ENCODE measurements at regions of chr11 and their contacts with region 1.

Region 1: DNA sequence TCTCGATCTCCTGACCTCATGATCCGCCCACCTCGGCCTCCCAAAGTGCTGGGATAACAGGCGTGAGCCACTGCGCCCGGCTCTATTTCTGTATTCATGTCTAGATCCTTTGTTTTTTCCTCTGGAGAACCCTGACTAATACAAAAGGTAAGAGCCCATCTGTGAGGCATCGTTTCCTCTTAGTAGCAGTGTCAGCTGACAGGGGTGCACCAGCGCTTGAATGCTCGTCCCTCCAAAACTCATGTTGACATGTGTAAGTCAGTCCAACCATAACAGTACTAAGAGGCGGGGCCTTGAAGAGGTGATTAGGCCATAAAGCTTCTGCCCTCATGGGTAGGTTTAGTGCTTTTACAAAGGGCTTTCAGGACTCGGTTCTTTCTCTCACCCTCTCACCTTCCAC is 470.1 kb upstream of the B3GAT1 start:
- DNase-seq: no peak
- H3K4me3 Mint-ChIP-seq: no peak overlapping the region
- H3K27ac Mint-ChIP-seq: no peak overlapping the region
- H3K4me1 Mint-ChIP-seq: no peaks in the 10 kb centered on the region
- H3K27me3 Mint-ChIP-seq: peaks cover 4% of the 10 kb centered on the region

Region 2: DNA sequence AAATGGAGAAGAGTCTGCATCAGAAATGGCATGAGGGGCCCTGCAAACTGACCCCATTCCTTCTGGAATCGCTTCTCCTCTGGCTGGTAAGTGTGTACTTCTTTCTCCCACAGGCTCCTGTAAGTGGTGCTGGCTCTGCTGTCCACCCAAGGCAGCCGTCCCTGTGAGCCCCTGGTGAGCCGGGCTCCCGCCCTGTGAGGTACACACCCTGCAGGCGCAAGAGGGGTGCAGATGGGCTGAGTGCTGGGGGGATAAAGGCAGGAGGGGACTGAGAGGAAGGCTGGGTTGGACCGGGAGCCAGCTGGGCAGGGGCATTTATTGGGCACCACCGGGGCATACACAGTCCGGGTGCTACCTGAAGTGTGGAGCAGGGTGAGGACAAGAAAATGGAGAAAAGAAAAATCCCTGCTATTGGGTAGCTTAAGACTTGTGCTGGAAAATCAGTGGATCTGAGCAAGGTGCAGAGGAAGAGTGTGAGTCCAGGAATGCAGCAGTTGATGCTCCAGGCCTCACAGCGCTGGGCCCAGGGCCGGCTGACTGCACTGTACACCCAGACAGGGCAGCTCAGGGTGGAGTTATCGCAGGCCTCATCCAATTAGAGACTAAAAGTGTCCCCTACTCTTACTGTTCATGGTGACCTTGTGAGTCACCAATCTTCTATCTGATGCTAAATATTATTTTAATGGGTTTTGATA is 15.0 kb before region 1 on chr11:
- CTCF ChIA-PET with region 1: interaction called, 13 read pairs
- DNase-seq: no peak
- H3K4me3 Mint-ChIP-seq: no peak overlapping the region
- H3K27ac Mint-ChIP-seq: no peak overlapping the region
- H3K4me1 Mint-ChIP-seq: no peaks in the 10 kb centered on the region
- H3K27me3 Mint-ChIP-seq: peaks cover 8% of the 10 kb centered on the region

Region 3: DNA sequence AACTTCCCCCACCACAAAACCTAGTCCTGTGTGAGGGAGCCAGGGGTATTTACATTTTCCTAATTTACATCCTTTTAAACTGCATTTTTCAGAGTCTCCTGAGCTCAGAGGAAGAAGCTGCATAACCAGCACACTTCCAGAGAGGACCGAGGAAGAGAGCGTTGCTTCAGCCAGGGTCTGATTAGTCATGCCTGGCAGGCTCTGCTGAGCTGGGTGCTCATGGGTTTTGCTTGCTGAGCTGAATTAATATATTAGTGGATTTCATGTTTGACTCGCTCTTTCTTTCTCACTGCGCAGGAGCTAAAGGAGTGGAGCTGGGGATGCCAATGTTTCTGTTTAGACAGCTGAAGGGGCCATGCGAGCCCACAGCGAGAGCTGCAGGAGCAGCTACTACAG is 69.2 kb after region 1 on chr11:
- CTCF ChIA-PET with region 1: no interaction called
- DNase-seq: no peak
- H3K4me3 Mint-ChIP-seq: no peak overlapping the region
- H3K27ac Mint-ChIP-seq: no peak overlapping the region
- H3K4me1 Mint-ChIP-seq: no peaks in the 10 kb centered on the region
- H3K27me3 Mint-ChIP-seq: peaks cover 3% of the 10 kb centered on the region